HEK293T (cell line): ENCODE measurements at regions of chr14 and their contacts with region 1.

Region 1: GRCh38 chr14:75654127-75654732 is 6.4 kb downstream of the ERG28 start:
- DNase-seq: peak; percentile 79

Region 2: GRCh38 chr14:75479770-75480600 is 174.2 kb before region 1 on chr14:
- CTCF ChIA-PET with region 1: interaction called, 10 read pairs
- POLR2A ChIA-PET with region 1: no interaction called
- DNase-seq: no peak

Region 3: DNA sequence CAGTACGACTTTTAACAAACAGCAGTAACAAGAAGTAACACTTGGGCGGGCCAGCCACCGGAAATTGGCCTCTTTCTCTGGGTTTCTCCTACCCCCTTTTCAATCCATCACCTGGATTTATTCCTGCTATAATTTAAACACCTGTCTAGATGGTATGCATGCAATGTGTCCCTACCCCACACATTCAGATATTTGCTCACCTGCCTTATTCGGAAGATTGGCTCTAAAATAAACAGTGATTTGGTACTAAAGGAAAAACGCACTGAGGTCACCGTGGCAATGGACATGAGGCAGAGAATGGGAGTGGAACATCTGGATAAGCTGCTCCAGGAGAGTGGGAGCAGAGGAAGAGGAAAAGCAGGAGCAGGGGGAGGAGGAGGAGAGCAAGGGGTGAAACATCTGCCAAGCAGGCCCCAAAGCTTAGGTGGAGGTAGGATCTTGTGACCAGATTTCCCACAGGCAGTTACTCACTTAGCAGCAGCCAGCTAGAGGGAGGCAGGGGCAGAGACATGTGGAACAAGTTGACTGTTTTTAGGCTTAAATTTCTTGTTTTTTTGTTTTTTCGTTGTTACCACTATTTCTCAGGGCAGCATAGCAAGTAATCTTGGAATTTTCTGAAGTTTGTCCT is 157.8 kb after region 1 on chr14:
- CTCF ChIA-PET with region 1: no interaction called
- POLR2A ChIA-PET with region 1: no interaction called
- DNase-seq: no peak